Activated CD8-positive, alpha-beta memory T cell treated with anti-CD3 and anti-CD28 coated beads, Interleukin-2, amount 10 ng/mL, durations not matched to agents 7 days and 5 days (primary cell): ENCODE measurements at regions of chr17 and their contacts with region 1.

Region 1: DNA sequence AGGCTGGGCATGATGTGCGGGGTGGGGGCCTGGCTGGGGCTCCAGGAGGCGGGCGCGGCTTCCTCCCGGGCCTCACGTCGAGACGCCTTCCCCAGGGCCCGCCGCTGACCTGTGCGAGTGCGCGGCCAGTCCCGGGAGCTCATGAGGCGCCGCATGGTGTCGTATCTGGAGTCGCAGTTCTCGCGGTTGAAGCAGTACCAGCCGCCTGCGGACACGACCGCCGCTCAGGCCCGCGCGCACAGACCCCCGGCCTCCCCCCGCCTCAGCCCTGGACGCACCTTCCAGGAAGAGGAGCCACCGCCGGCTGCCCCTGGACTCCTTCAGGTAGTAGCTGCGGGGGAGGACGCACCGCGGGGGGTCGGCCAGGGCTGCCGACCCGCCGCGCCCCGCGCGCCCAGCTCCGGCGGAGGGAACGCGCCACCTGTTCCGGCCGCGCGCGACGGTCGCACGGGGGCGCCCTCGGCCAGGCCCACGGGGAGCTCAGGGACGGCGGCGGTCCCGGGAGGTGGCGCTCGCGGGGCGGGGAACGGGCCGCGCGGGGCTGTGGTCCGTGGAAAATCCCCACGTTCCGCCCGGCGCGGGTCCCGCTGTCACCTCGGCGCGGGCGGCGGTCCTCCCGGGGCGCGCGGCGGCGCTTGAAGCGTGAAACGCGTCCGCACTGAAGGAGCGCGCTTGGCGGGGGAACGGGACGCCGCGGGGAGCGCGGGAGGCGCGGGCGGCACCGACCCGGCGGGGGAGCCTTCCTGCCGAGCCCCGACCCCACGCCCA is 1.4 kb downstream of the NOTUM start:
- DNase-seq: peak; percentile 75
- ATAC-seq: peak; percentile 96
- H3K4me3 Mint-ChIP-seq: no peak overlapping the region
- H3K27ac Mint-ChIP-seq: no peak overlapping the region
- H3K4me1 Mint-ChIP-seq: no peaks in the 10 kb centered on the region
- H3K27me3 Mint-ChIP-seq: peaks cover 41% of the 10 kb centered on the region

Region 2: GRCh38 chr17:81910840-81911276 is 48.7 kb before region 1 on chr17:
- CTCF ChIA-PET with region 1: no interaction called
- DNase-seq: no peak
- ATAC-seq: peak; percentile 52
- H3K4me3 Mint-ChIP-seq: peak overlapping the region; percentile 83
- H3K27ac Mint-ChIP-seq: peak overlapping the region; percentile 70
- H3K4me1 Mint-ChIP-seq: peaks cover 14% of the 10 kb centered on the region
- H3K27me3 Mint-ChIP-seq: no peaks in the 10 kb centered on the region

Region 3: DNA sequence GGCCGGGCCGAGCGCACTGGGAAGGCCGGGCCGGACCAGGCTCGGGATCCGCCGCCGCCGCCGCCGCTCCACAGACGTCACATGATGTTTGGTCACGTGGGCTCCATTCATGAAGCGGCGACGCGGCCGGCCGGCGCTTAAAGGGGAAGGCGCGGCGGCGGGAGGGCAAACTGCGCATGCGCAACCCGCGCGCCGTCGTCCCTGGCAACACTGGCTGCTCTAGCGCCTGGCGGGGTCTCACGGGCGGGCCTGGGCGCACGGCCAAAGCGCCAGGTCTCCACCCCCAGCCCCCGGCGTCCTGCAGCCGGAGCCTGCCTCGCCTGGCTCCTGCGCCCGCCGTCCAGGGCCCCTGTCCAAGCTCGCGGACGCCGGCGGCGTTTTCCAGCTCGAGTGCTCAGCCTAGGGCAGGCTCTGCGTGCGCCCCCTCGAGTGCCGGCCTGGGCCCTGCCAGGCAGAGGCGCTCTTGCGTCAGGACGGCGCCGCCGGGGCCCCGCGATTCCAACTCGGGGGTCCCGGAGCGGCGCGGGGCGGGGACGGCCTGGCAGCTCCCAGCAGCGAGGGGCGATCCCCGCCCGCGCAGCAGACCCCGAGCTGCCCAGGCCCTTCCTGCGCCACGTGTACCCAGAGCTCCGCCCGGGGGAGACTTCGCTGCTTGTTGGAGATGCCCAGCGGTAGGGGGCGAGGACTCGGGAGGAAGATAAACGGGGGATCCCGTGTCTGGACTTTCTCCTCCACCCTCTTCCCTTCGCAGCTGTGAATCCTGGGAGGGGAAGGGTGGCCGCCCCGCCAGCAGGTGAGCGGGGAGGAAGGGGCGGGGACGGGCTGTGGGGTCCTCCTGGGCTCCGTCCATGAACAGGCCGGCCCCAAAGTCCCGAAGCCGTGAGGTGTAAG is 31.6 kb before region 1 on chr17 and contains the start of gene MAFG:
- CTCF ChIA-PET with region 1: interaction called, 10 read pairs
- DNase-seq: peak; percentile 93
- ATAC-seq: peak; percentile 76
- H3K4me3 Mint-ChIP-seq: peak within 1 kb of the TSS; percentile 79
- H3K27ac Mint-ChIP-seq: peak within 1 kb of the TSS; percentile 85
- H3K4me1 Mint-ChIP-seq: peaks cover 28% of the 10 kb centered on the region
- H3K27me3 Mint-ChIP-seq: peaks cover 2% of the 10 kb centered on the region
- total RNA-seq, gene MAFG: 20.2 to 23.8 TPM

Region 4: GRCh38 chr17:81977211-81978027 is 17.9 kb after region 1 on chr17 and contains the start of gene ASPSCR1:
- CTCF ChIA-PET with region 1: interaction called, 22 read pairs
- DNase-seq: peak; percentile 91
- ATAC-seq: peak; percentile 89
- H3K4me3 Mint-ChIP-seq: peak within 1 kb of the TSS; percentile 93
- H3K27ac Mint-ChIP-seq: peak within 1 kb of the TSS; percentile 98
- H3K4me1 Mint-ChIP-seq: peaks cover 29% of the 10 kb centered on the region
- H3K27me3 Mint-ChIP-seq: peaks cover 5% of the 10 kb centered on the region
- total RNA-seq, gene ASPSCR1: 29.5 to 31.4 TPM

Region 5: DNA sequence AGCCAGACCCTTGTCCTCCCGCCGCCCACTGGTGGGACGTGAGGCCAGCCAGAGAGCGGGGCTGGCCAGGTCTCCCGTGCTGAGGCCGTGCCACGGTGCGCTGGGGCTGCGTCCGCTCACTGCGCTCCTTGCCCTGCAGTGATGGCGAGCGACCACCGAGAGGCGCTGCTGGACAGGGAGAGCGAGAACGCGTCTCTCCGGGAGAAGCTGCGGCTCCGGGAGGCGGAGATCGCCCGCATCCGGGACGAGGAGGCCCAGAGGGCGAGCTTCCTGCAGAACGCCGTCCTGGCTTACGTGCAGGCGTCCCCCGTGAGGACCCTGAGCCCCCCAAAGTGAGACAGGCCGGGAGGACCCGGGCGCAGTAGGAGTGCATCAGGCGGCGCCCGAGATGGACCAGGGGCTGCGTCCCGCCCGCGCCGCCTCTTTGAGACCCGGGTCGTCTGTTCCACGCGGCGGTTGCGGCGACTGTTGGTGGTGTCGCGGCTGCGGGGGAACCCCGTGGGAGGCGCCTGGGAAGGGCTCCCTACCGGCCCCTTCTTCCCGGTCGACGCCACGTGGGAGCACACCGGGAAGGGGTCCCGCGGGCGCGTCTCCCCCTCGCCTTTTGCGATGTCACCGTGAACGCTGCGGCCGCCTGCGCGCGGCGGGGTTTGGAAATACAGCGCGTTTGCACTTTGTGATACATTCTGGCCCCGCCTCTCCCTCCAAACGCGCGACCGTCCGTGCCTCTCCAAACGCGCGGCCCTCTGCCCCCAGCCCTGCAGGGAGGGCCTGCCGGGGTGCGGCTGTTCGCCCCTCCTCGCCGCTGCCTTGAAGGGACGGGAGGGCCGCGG is 71.1 kb after region 1 on chr17:
- CTCF ChIA-PET with region 1: interaction called, 24 read pairs
- DNase-seq: peak; percentile 88
- ATAC-seq: peak; percentile 71
- H3K4me3 Mint-ChIP-seq: peak overlapping the region; percentile 70
- H3K27ac Mint-ChIP-seq: peak overlapping the region; percentile 59
- H3K4me1 Mint-ChIP-seq: peaks cover 28% of the 10 kb centered on the region
- H3K27me3 Mint-ChIP-seq: no peaks in the 10 kb centered on the region

Region 6: GRCh38 chr17:82153745-82154375 is 194.3 kb after region 1 on chr17:
- CTCF ChIA-PET with region 1: interaction called, 19 read pairs
- DNase-seq: peak; percentile 84
- ATAC-seq: peak; percentile 98
- H3K4me3 Mint-ChIP-seq: no peak overlapping the region
- H3K27ac Mint-ChIP-seq: no peak overlapping the region
- H3K4me1 Mint-ChIP-seq: peaks cover 2% of the 10 kb centered on the region
- H3K27me3 Mint-ChIP-seq: no peaks in the 10 kb centered on the region